ENCODE measurements at regions of chr10 and their contacts with region 1.

Region 1: GRCh38 chr10:5446390-5446926 is 34.1 kb downstream of the NET1 start:
- DNase-seq: peak; percentile 89 to 93 (median 91)
- ATAC-seq: peak; percentile 97 to 99 (median 98)
- H3K4me3 ChIP-seq: peak overlapping the region; percentile 2 to 65 (median 54)
- H3K27ac ChIP-seq: peak overlapping the region in 10 of 12 donors; percentile 7 to 74 (median 60)
- H3K4me1 ChIP-seq: peaks cover 0 to 39% (median 7%) of the 10 kb centered on the region in 12 donors
- H3K27me3 ChIP-seq: no peaks in the 10 kb centered on the region
- CTCF ChIP-seq: no peak
- POLR2A ChIP-seq: peak in 1 of 2 donors; percentile 85

Region 2: DNA sequence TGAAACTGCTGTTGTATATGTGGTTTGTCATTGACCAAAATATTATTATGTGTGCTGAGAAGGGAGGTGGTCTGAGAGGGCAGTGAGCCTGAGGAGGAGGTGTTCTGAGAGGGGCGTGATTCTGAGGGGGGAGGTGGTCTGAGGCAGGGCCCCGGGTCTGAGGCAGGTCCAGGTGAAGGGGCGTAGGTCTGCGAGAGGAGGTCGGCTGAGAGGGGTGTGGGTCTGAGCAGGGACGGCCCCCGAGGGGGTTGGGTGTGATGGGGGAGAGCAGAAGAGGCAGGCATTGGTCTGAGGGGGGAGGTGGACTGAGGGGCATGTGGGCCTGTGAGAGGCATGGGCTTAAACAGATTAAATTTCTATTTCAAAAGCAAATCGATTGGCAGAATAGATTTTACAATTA is 217.4 kb before region 1 on chr10:
- intact Hi-C with region 1: no loop called
- DNase-seq: no peak
- ATAC-seq: no peak
- H3K4me3 ChIP-seq: no peak overlapping the region
- H3K27ac ChIP-seq: no peak overlapping the region
- H3K4me1 ChIP-seq: peaks cover 0 to 4% (median 0%) of the 10 kb centered on the region in 12 donors
- H3K27me3 ChIP-seq: no peaks in the 10 kb centered on the region
- CTCF ChIP-seq: no peak
- POLR2A ChIP-seq: no peak

Region 3: GRCh38 chr10:5423771-5424170 is 22.7 kb before region 1 on chr10:
- intact Hi-C with region 1: no loop called
- DNase-seq: no peak
- ATAC-seq: no peak
- H3K4me3 ChIP-seq: no peak overlapping the region
- H3K27ac ChIP-seq: no peak overlapping the region
- H3K4me1 ChIP-seq: peaks cover 0 to 18% (median 0%) of the 10 kb centered on the region in 12 donors
- H3K27me3 ChIP-seq: no peaks in the 10 kb centered on the region
- CTCF ChIP-seq: no peak
- POLR2A ChIP-seq: no peak

Region 4: DNA sequence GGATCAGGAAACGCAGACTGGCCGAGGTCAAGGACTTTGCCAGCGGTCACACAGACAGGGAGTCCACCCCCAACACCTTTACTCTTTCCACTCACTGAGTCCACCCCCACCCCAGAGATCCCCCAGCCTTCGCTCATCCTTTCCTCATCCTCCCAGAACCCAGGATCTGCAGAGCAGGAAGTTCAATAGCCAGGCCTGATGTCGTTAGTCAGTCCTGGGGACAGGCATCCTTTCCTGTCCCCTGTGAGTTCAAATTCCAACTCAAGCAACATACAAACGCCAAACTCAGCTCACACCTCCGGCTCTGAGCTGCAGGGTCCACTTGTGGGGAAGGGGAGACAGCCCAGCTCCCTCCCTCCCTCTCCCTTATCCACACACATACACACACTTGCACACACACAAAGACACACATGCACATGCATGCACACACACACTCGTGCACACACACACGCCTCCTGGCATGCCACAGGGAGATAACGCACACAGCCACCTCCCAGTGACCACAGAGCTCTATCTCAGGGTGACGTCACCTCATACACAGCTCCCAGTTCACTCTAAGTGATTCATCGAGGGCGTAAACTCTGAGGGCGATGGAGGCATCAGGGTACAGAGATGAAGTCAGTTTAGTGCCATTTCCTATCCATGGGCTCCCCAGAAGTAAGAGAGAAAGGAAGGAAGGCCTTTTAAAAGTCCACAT is 102.2 kb after region 1 on chr10:
- intact Hi-C with region 1: loop called in 2 of 10 experiments (anchors 5 to 10 kb)
- DNase-seq: peak in 3 of 5 donors; percentile 51 to 74 (median 62)
- ATAC-seq: peak in 3 of 4 donors; percentile 74 to 85 (median 82)
- H3K4me3 ChIP-seq: no peak overlapping the region
- H3K27ac ChIP-seq: peak overlapping the region; percentile 34 to 74 (median 58)
- H3K4me1 ChIP-seq: peaks cover 0 to 42% (median 33%) of the 10 kb centered on the region in 12 donors
- H3K27me3 ChIP-seq: no peaks in the 10 kb centered on the region
- CTCF ChIP-seq: no peak
- POLR2A ChIP-seq: no peak

Region 5: DNA sequence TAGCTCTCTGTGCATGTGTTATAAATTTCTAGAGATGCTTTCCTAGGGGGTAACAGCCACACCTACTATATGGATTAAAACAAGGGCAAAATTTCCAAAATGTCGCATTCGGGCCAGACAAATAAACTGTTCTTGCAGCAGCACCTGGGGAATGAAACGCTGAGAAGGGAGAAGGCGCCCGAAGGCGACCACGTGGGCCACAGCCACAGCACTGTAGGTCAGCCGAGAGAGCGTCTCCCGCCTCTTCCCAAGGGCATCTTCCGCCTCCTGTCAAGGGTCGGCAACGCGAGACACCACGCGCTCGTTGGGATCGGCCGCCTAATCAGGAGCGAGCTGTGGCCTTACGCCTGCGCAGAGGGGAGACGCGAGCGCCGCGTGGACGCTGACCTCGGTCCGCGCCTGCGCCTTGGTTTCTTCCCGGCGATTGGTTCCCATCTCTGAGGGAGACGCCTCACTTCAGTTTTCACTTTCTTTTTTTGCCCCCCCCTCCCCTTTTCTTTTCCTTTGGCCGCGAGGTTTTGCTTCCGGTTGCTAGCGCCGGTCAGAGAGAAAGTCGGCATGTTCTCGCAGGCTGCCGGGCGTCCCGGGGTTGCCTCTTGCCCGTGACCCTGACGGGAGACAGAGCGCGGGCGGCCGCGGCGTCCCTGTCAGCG is 238.0 kb after region 1 on chr10 and contains the start of gene TASOR2:
- intact Hi-C with region 1: loop called in 1 of 10 experiments (anchors 5 kb)
- DNase-seq: peak; percentile 98 to 100 (median 99)
- ATAC-seq: peak; percentile 98 to 99 (median 99)
- H3K4me3 ChIP-seq: peak within 1 kb of the TSS; percentile 63 to 100 (median 91)
- H3K27ac ChIP-seq: peak within 1 kb of the TSS; percentile 78 to 95 (median 92)
- H3K4me1 ChIP-seq: peaks cover 0 to 27% (median 19%) of the 10 kb centered on the region in 12 donors
- H3K27me3 ChIP-seq: peaks cover 0 to 6% (median 0%) of the 10 kb centered on the region in 9 donors
- CTCF ChIP-seq: no peak
- POLR2A ChIP-seq: peak in 1 of 2 donors; percentile 55
- total RNA-seq, gene TASOR2: 28.7 to 47.2 (median 35.5) TPM

Measured in heart left ventricle (tissue), 16 donors.